Activated T-helper 1 cell treated with anti-CD3 and anti-CD28 coated beads, Interleukin-12 subunit alpha, Interleukin-12 subunit beta, Interleukin-2, Interleukin-4 antibody, amounts not matched to agents 30 ng/mL and 10 ng/mL and 1 ng/mL, durations not matched to agents 14 hours and 24 hours and 36 hours (primary cell): ENCODE measurements at regions of chr20 and their contacts with region 1.

Region 1: DNA sequence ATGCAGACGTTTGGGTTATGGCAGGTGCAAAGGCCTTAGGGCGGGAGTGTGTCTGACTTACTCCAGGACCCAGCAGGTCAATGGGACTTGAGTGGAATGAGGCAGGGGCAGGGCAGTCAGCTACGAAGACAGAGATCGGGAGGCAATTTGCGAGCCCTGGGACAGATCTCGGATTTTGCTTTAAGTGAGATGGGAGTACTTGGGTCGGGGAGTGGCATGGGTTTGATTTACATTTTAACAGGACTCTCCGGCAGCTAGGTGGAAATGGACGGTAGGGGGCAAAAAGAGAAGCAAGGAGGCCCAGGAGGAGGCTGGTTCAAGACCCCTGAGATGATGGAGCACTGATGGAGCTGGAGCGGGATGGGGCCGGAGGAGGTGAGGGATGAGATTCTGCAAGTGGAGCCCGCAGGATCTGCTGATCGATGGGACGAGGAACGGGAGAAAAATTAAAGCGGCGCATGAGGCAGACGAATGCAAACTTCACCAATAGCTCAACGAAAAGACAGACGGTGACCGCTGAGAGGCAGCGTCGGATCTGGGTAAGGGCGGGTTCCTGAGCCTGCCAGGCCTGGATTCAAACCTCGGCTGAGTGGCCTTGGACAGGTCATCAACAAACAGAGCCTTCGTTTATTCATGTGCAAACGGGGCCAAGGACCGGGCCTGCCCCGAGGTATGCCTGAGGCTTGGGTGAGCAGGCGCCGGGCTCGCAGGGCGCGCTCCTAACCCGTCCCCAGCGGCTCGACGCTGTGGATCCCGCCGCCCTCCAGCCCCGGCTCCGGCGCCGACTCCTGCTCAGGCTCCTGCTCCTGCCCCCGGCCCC is 756 bp upstream of the RBCK1 start:
- DNase-seq: peak; percentile 59
- H3K4me3 Mint-ChIP-seq: peak overlapping the region; percentile 86
- H3K27ac Mint-ChIP-seq: peak overlapping the region; percentile 95
- H3K4me1 Mint-ChIP-seq: peaks cover 47% of the 10 kb centered on the region
- H3K27me3 Mint-ChIP-seq: no peaks in the 10 kb centered on the region

Region 2: GRCh38 chr20:381581-382290 is 25.6 kb before region 1 on chr20:
- intact Hi-C with region 1: loop called (anchors 1 kb)
- DNase-seq: peak; percentile 75
- H3K4me3 Mint-ChIP-seq: peak overlapping the region; percentile 81
- H3K27ac Mint-ChIP-seq: peak overlapping the region; percentile 68
- H3K4me1 Mint-ChIP-seq: peaks cover 22% of the 10 kb centered on the region
- H3K27me3 Mint-ChIP-seq: peaks cover 3% of the 10 kb centered on the region

Region 3: GRCh38 chr20:478949-479429 is 71.6 kb after region 1 on chr20:
- intact Hi-C with region 1: loop called (anchors 1 kb)
- DNase-seq: peak; percentile 25
- H3K4me3 Mint-ChIP-seq: no peak overlapping the region
- H3K27ac Mint-ChIP-seq: peak overlapping the region; percentile 69
- H3K4me1 Mint-ChIP-seq: peaks cover 33% of the 10 kb centered on the region
- H3K27me3 Mint-ChIP-seq: no peaks in the 10 kb centered on the region